Cardiac septum (tissue), 1 donor: ENCODE measurements at regions of chr5 and their contacts with region 1.

Region 1: GRCh38 chr5:66367814-66368541 is 223.9 kb downstream of the SREK1 start:
- DNase-seq: no peak

Region 2: DNA sequence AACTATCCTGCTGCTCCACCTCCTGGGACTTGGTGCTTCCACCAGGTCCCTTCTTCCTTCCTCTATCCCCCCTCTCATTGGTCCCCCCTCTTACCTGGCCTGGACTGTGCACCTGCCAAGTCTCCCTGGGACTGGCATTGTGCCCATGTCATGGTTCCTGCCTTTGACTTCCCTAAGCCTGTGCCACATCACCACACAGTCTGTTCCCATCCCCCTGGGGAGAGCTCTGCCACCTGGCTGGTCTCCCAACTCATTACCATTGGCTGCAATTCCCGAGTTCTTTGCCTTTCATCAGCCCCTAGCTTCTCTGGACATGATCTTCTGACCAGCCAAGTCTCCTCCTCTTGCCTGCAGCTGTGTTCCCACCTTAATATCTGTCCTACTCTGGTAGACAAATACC is 43.6 kb before region 1 on chr5:
- intact Hi-C with region 1: loop called (anchors 1 kb)
- DNase-seq: peak; percentile 79

Region 3: DNA sequence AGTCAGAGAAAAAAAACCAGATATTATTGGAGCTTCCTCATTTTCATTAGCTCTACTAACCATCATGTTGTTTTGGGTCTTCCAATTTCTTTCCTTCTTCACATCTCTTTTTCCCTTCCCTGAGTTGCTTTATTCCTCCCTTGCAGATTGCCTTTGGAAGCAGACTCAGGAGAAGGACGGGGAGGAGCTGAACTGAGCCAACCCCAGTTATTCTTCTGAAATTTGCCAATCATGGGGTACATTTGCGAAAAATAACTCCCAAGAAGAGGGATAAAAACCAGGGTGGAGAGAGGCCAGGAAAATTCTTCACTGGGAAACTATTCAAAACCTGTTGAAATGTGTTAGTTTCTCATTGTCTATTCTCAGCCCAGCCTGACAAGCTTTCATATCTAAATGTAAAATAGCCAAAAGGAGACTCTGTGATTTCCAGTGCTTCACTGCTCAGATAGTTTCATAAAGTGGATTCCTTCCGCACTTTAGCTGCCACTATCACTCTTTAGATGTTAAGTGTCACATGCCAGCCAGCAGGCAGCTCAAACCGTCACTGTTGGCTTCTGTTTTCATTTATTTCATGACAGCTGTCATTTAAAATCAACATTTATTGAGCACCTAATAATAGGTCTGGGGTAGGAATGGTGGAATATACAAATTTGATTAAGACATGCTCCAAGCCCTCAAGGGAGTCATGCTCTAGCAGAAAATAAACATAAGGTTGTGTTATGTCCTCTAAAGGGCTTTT is 19.4 kb before region 1 on chr5:
- intact Hi-C with region 1: loop called (anchors 2 kb)
- DNase-seq: no peak

Region 4: GRCh38 chr5:66796305-66797292 is 428.6 kb after region 1 on chr5:
- intact Hi-C with region 1: no loop called
- DNase-seq: no peak